Activated naive CD4-positive, alpha-beta T cell treated with anti-CD3 and anti-CD28 coated beads, Interleukin-2, amount 10 ng/mL, durations not matched to agents 7 days and 5 days (primary cell): ENCODE measurements at regions of chr2 and their contacts with region 1.

Region 1: DNA sequence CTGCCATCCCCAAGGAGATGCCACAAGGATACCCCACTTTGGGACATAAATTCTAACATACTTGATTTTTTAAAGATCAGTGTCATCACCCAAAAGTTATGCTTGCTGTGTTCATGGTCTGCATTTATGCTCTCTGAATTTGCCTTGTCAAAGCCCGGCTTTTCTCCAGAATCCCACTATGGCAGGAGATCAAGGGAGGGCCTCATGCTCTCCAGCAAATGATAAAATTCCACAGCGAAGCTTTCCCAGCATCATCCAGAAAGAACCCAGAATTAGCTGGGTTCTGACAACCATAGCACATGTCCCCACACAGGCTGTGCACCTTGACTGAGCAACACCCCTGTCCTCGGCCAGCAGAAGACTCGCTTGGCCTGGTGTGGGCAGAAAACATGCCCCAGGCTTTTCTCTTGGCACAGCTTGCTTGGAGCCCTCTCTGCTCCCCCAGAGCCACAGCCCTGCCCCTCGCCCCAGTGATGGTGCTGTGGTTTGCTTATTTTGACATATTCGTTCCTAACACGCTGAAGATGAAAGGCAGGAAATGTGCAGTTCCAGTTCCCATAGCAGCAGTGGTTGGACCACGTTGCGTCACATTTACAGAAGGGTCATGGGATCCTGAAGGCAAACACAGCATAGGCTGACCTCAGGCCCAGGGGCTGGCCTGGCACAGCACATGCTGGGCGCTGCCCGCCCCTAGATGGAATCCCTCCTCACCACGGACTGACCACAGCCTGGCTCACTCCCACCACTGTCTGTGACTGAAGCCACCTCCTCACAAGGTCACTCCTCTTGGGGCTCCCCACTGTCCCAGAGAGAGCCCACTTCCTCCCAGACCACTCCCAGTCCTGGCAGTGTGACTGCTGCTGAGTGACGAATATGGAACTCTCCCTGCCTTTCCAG is 14.1 kb upstream of the CHRNA1 start:
- DNase-seq: peak; percentile 91
- H3K4me3 Mint-ChIP-seq: peak overlapping the region; percentile 38
- H3K27ac Mint-ChIP-seq: peak overlapping the region; percentile 86
- H3K4me1 Mint-ChIP-seq: peaks cover 52% of the 10 kb centered on the region
- H3K27me3 Mint-ChIP-seq: peaks cover 18% of the 10 kb centered on the region

Region 2: GRCh38 chr2:174634130-174635014 is 144.0 kb before region 1 on chr2:
- CTCF ChIA-PET with region 1: no interaction called
- DNase-seq: peak; percentile 67
- H3K4me3 Mint-ChIP-seq: peak overlapping the region; percentile 93
- H3K27ac Mint-ChIP-seq: peak overlapping the region; percentile 98
- H3K4me1 Mint-ChIP-seq: peaks cover 67% of the 10 kb centered on the region
- H3K27me3 Mint-ChIP-seq: no peaks in the 10 kb centered on the region

Region 3: GRCh38 chr2:174985630-174986029 is 207.3 kb after region 1 on chr2:
- CTCF ChIA-PET with region 1: interaction called, 56 read pairs
- DNase-seq: no peak
- H3K4me3 Mint-ChIP-seq: no peak overlapping the region
- H3K27ac Mint-ChIP-seq: no peak overlapping the region
- H3K4me1 Mint-ChIP-seq: no peaks in the 10 kb centered on the region
- H3K27me3 Mint-ChIP-seq: peaks cover 6% of the 10 kb centered on the region